Naive thymus-derived CD4-positive, alpha-beta T cell (primary cell): ENCODE measurements at regions of chr7 and their contacts with region 1.

Region 1: GRCh38 chr7:106022193-106022821 is 59.2 kb downstream of the CDHR3 start:
- DNase-seq: peak; percentile 38 to 96 (median 93)
- ATAC-seq: peak; percentile 89
- H3K4me3 ChIP-seq: peak overlapping the region; percentile 23
- H3K4me3 Mint-ChIP-seq: peak overlapping the region; percentile 43 to 82 (median 68)
- H3K27ac ChIP-seq: peak overlapping the region; percentile 87
- H3K27ac Mint-ChIP-seq: peak overlapping the region; percentile 86 to 99 (median 98)
- H3K4me1 ChIP-seq: peaks cover 30 to 76% of the 10 kb centered on the region in 2 donors
- H3K4me1 Mint-ChIP-seq: peaks cover 23 to 89% (median 85%) of the 10 kb centered on the region in 7 donors
- H3K27me3 ChIP-seq: no peaks in the 10 kb centered on the region
- H3K27me3 Mint-ChIP-seq: peaks cover 0 to 15% (median 0%) of the 10 kb centered on the region in 5 donors

Region 2: GRCh38 chr7:104943502-104944343 is 1078.6 kb before region 1 on chr7:
- CTCF ChIA-PET with region 1: no interaction called
- POLR2A ChIA-PET with region 1: no interaction called
- intact Hi-C with region 1: loop called in 1 of 2 experiments (anchors 1 kb)
- DNase-seq: peak; percentile 31 to 85 (median 68)
- ATAC-seq: peak; percentile 23
- H3K4me3 ChIP-seq: peak overlapping the region; percentile 40
- H3K4me3 Mint-ChIP-seq: peak overlapping the region; percentile 77 to 95 (median 88)
- H3K27ac ChIP-seq: peak overlapping the region; percentile 87
- H3K27ac Mint-ChIP-seq: peak overlapping the region; percentile 95 to 100 (median 100)
- H3K4me1 ChIP-seq: peaks cover 46 to 50% of the 10 kb centered on the region in 2 donors
- H3K4me1 Mint-ChIP-seq: peaks cover 45 to 79% (median 70%) of the 10 kb centered on the region in 7 donors
- H3K27me3 ChIP-seq: no peaks in the 10 kb centered on the region
- H3K27me3 Mint-ChIP-seq: peaks cover 0 to 2% (median 0%) of the 10 kb centered on the region in 5 donors

Region 3: DNA sequence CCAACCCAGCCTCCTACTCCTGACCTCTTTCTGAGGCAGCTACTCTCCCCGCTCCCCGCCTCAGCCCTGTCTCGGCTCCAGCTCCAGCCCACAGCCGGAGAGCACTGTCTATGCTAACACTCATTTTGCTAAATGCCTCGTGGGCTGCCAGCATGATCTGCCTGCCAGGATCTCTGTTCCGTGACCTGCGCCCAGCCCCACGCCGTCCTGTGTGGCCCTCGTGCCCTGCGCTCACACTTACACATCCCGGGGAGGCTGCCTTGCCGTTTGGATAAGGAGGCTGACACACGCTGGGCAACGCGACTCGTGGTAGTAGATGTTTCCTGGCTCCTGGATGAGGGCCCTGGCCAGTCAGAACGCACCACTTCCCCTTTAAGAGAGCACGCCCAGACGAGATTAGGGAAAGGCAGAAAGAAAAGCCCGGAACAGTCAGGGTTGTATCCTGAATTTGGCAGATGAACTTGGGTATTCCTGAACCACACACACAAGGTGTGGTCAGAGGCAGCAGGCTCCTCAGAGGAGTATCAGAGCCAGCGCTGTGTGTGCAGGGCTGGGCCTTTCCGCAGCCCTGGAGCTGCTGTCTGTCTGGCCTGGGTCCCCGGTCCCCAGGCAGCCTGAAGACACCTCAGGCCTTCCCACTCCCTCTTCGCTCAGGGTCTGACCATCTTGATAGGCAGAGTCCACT is 343.4 kb before region 1 on chr7:
- CTCF ChIA-PET with region 1: interaction called, 3 read pairs
- POLR2A ChIA-PET with region 1: interaction called, 5 read pairs
- intact Hi-C with region 1: loop called in 1 of 2 experiments (anchors 5 kb)
- DNase-seq: peak in 5 of 9 donors; percentile 11 to 33 (median 26)
- ATAC-seq: peak; percentile 47
- H3K4me3 ChIP-seq: peak overlapping the region; percentile 30
- H3K4me3 Mint-ChIP-seq: peak overlapping the region; percentile 76 to 97 (median 86)
- H3K27ac ChIP-seq: peak overlapping the region; percentile 59
- H3K27ac Mint-ChIP-seq: peak overlapping the region; percentile 87 to 99 (median 95)
- H3K4me1 ChIP-seq: peaks cover 41 to 43% of the 10 kb centered on the region in 2 donors
- H3K4me1 Mint-ChIP-seq: peaks cover 56 to 94% (median 86%) of the 10 kb centered on the region in 7 donors
- H3K27me3 ChIP-seq: no peaks in the 10 kb centered on the region
- H3K27me3 Mint-ChIP-seq: no peaks in the 10 kb centered on the region

Region 4: GRCh38 chr7:105808703-105809590 is 213.4 kb before region 1 on chr7:
- CTCF ChIA-PET with region 1: no interaction called
- POLR2A ChIA-PET with region 1: interaction called, 4 read pairs
- intact Hi-C with region 1: loop called in 1 of 2 experiments (anchors 1 kb)
- DNase-seq: peak; percentile 11 to 77 (median 38)
- ATAC-seq: peak; percentile 94
- H3K4me3 ChIP-seq: peak overlapping the region; percentile 25
- H3K4me3 Mint-ChIP-seq: peak overlapping the region in 8 of 10 donors; percentile 1 to 68 (median 31)
- H3K27ac ChIP-seq: peak overlapping the region; percentile 15
- H3K27ac Mint-ChIP-seq: peak overlapping the region in 8 of 9 donors; percentile 0 to 93 (median 45)
- H3K4me1 ChIP-seq: peaks cover 33 to 50% of the 10 kb centered on the region in 2 donors
- H3K4me1 Mint-ChIP-seq: peaks cover 40 to 73% (median 65%) of the 10 kb centered on the region in 7 donors
- H3K27me3 ChIP-seq: no peaks in the 10 kb centered on the region
- H3K27me3 Mint-ChIP-seq: no peaks in the 10 kb centered on the region

Region 5: GRCh38 chr7:105896407-105896911 is 125.8 kb before region 1 on chr7:
- CTCF ChIA-PET with region 1: no interaction called
- POLR2A ChIA-PET with region 1: no interaction called
- intact Hi-C with region 1: no loop called
- DNase-seq: peak in 3 of 9 donors; percentile 21 to 37 (median 36)
- ATAC-seq: peak; percentile 71
- H3K4me3 ChIP-seq: no peak overlapping the region
- H3K4me3 Mint-ChIP-seq: peak overlapping the region in 2 of 10 donors; percentile 24 to 38
- H3K27ac ChIP-seq: no peak overlapping the region
- H3K27ac Mint-ChIP-seq: peak overlapping the region in 1 of 9 donors; percentile 63
- H3K4me1 ChIP-seq: peaks cover 3 to 21% of the 10 kb centered on the region in 2 donors
- H3K4me1 Mint-ChIP-seq: peaks cover 0 to 57% (median 37%) of the 10 kb centered on the region in 7 donors
- H3K27me3 ChIP-seq: no peaks in the 10 kb centered on the region
- H3K27me3 Mint-ChIP-seq: peaks cover 0 to 15% (median 0%) of the 10 kb centered on the region in 5 donors

Region 6: DNA sequence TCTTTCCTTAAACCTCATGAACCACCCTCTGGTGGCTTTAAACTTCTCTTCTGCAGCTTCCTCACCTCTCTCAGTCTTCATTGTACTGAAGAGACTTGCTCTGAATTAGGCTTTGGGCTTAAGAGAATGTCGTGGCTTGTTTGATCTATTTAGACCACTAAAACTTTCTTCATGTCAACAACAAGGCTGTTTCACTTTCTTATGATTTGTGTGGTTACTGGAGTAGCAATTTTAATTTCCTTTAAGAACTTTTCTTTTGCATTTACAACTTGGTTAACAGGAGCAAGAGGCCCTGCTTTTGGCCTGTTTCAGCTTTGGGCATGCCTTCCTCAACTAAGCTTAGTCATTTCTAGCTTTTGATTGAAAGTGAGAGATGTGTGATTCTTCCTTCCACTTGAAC is 97.4 kb before region 1 on chr7:
- CTCF ChIA-PET with region 1: interaction called, 3 read pairs
- POLR2A ChIA-PET with region 1: no interaction called
- intact Hi-C with region 1: loop called (anchors 1 kb)
- DNase-seq: peak in 7 of 9 donors; percentile 36 to 84 (median 74)
- ATAC-seq: peak; percentile 90
- H3K4me3 ChIP-seq: no peak overlapping the region
- H3K4me3 Mint-ChIP-seq: peak overlapping the region; percentile 6 to 65 (median 33)
- H3K27ac ChIP-seq: peak overlapping the region; percentile 46
- H3K27ac Mint-ChIP-seq: peak overlapping the region; percentile 47 to 92 (median 84)
- H3K4me1 ChIP-seq: peaks cover 12 to 18% of the 10 kb centered on the region in 2 donors
- H3K4me1 Mint-ChIP-seq: peaks cover 20 to 46% (median 40%) of the 10 kb centered on the region in 7 donors
- H3K27me3 ChIP-seq: no peaks in the 10 kb centered on the region
- H3K27me3 Mint-ChIP-seq: peaks cover 0 to 38% (median 0%) of the 10 kb centered on the region in 5 donors

Region 7: GRCh38 chr7:106041140-106041717 is 18.9 kb after region 1 on chr7:
- CTCF ChIA-PET with region 1: interaction called, 85 read pairs
- POLR2A ChIA-PET with region 1: interaction called, 19 read pairs
- intact Hi-C with region 1: loop called (anchors 1 kb)
- DNase-seq: peak in 3 of 9 donors; percentile 22 to 32 (median 25)
- ATAC-seq: peak; percentile 56
- H3K4me3 ChIP-seq: no peak overlapping the region
- H3K4me3 Mint-ChIP-seq: peak overlapping the region in 8 of 10 donors; percentile 5 to 68 (median 58)
- H3K27ac ChIP-seq: no peak overlapping the region
- H3K27ac Mint-ChIP-seq: peak overlapping the region in 8 of 9 donors; percentile 32 to 91 (median 73)
- H3K4me1 ChIP-seq: peaks cover 5 to 33% of the 10 kb centered on the region in 2 donors
- H3K4me1 Mint-ChIP-seq: peaks cover 18 to 58% (median 38%) of the 10 kb centered on the region in 7 donors
- H3K27me3 ChIP-seq: no peaks in the 10 kb centered on the region
- H3K27me3 Mint-ChIP-seq: peaks cover 0 to 48% (median 0%) of the 10 kb centered on the region in 5 donors